ENCODE measurements at regions of chr10 and their contacts with region 1.

Region 1: DNA sequence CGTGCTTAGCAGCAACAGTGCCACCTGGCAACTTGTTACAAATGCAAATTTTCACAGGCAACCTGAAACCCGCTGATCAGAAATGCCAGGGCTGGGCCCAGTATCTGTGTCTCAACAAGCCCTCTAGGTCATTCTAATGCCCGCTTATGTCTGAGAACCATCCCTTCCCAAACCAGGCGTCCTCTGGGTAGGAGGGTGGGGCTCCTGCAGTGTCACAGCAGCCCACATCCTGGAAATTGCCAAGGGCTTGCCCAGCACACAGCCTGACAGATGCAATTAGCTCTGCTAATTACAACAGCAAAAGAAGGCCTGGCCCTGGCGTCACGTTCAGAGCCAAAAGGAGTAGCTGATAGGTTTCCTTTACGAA is 15.9 kb downstream of the ITPRIP start:
- DNase-seq: peak; percentile 91
- H3K4me3 Mint-ChIP-seq: no peak overlapping the region
- H3K27ac Mint-ChIP-seq: peak overlapping the region; percentile 95
- H3K4me1 Mint-ChIP-seq: peaks cover 74% of the 10 kb centered on the region
- H3K27me3 Mint-ChIP-seq: no peaks in the 10 kb centered on the region
- CTCF ChIP-seq: no peak

Region 2: DNA sequence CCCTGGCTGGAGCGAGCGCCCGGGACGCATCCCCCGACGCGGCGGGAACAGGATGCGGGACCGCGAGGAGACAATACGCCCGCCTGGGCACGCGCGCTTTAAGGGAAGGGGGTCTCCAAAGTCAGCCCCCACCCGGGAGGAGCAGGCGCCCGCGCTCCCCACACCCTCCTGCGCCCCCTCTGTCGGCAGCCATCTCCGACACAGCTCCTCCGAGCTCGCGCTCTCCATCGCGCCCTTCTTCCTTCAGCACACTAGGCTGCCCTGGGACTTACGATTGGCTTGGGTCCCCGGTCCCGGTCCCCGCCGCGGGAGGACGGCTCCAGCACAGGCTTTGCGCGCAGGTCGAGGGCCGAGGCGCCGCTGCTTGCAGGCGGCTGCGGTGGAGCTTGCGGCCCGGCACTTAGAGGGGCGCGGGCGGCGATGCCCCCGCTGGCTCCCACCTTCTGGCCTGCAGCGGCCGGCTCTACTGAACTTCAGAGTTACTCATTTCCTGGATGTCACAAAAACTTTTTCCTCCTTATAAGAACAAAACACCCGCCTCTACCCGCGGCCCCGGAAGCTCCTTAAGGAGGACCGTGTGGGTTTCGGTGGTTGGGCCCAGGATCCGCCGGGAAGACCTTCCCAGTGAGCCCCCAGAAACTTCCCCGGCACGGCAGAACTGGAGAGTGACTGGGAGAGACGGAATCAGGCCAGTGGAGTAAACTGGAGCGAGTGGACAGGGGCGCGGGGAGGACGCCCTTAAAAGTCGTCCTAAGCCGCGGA is 15.8 kb after region 1 on chr10 and contains the start of gene ITPRIP:
- CTCF ChIA-PET with region 1: interaction called, 20 read pairs
- POLR2A ChIA-PET with region 1: interaction called, 146 read pairs
- intact Hi-C with region 1: no loop called
- DNase-seq: peak; percentile 81
- H3K4me3 Mint-ChIP-seq: peak within 1 kb of the TSS; percentile 80
- H3K27ac Mint-ChIP-seq: peak within 1 kb of the TSS; percentile 97
- H3K4me1 Mint-ChIP-seq: peaks cover 39% of the 10 kb centered on the region
- H3K27me3 Mint-ChIP-seq: no peaks in the 10 kb centered on the region
- CTCF ChIP-seq: no peak
- total RNA-seq, gene ITPRIP: 29.4 and 29.8 TPM in 2 replicates

Measured in MCF 10A (cell line).